Activated naive CD4-positive, alpha-beta T cell treated with anti-CD3 and anti-CD28 coated beads for 36 hours (primary cell): ENCODE measurements at regions of chr12 and their contacts with region 1.

Region 1: GRCh38 chr12:27498149-27498548 is 25.9 kb upstream of the PPFIBP1 start:
- DNase-seq: no peak
- H3K4me3 Mint-ChIP-seq: no peak overlapping the region
- H3K27ac Mint-ChIP-seq: peak overlapping the region; percentile 11
- H3K4me1 Mint-ChIP-seq: peaks cover 27% of the 10 kb centered on the region
- H3K27me3 Mint-ChIP-seq: peaks cover 18% of the 10 kb centered on the region

Region 2: GRCh38 chr12:27627123-27627835 is 129.1 kb after region 1 on chr12:
- CTCF ChIA-PET with region 1: no interaction called
- intact Hi-C with region 1: loop called (anchors 2 kb)
- DNase-seq: no peak
- H3K4me3 Mint-ChIP-seq: no peak overlapping the region
- H3K27ac Mint-ChIP-seq: peak overlapping the region; percentile 8
- H3K4me1 Mint-ChIP-seq: peaks cover 16% of the 10 kb centered on the region
- H3K27me3 Mint-ChIP-seq: no peaks in the 10 kb centered on the region